HCT116 (cell line): ENCODE measurements at regions of chr2 and their contacts with region 1.

Region 1: GRCh38 chr2:67476809-67477790 is 80.0 kb downstream of the ETAA1 start:
- DNase-seq: peak; percentile 12
- ATAC-seq: peak; percentile 73
- H3K4me3 ChIP-seq: no peak overlapping the region
- H3K27ac ChIP-seq: no peak overlapping the region
- H3K4me1 ChIP-seq: no peaks in the 10 kb centered on the region
- H3K27me3 ChIP-seq: no peaks in the 10 kb centered on the region; the same call in 1 of the 2 replicates
- CTCF ChIP-seq: peak; percentile 29 to 54 (median 38); a peak in 4 of 6 replicates
- POLR2A ChIP-seq: no peak
- RAD21 ChIP-seq: peak; percentile 66

Region 2: GRCh38 chr2:65647249-65647842 is 1829.8 kb before region 1 on chr2:
- CTCF ChIA-PET with region 1: no interaction called
- POLR2A ChIA-PET with region 1: no interaction called
- RAD21 ChIA-PET with region 1: no interaction called
- intact Hi-C with region 1: loop called (anchors 10 kb)
- DNase-seq: no peak
- ATAC-seq: no peak
- H3K4me3 ChIP-seq: no peak overlapping the region
- H3K27ac ChIP-seq: no peak overlapping the region
- H3K4me1 ChIP-seq: no peaks in the 10 kb centered on the region
- H3K27me3 ChIP-seq: no peaks in the 10 kb centered on the region
- CTCF ChIP-seq: no peak
- POLR2A ChIP-seq: no peak
- RAD21 ChIP-seq: no peak

Region 3: GRCh38 chr2:67290451-67291290 is 186.4 kb before region 1 on chr2:
- CTCF ChIA-PET with region 1: no interaction called
- POLR2A ChIA-PET with region 1: no interaction called
- RAD21 ChIA-PET with region 1: no interaction called
- intact Hi-C with region 1: no loop called
- DNase-seq: peak; percentile 3
- ATAC-seq: no peak
- H3K4me3 ChIP-seq: no peak overlapping the region
- H3K27ac ChIP-seq: no peak overlapping the region
- H3K4me1 ChIP-seq: peaks cover 0 to 8% of the 10 kb centered on the region in 2 experiments; a peak in 1 of 4 replicates
- H3K27me3 ChIP-seq: no peaks in the 10 kb centered on the region
- CTCF ChIP-seq: no peak
- POLR2A ChIP-seq: no peak
- RAD21 ChIP-seq: no peak

Region 4: DNA sequence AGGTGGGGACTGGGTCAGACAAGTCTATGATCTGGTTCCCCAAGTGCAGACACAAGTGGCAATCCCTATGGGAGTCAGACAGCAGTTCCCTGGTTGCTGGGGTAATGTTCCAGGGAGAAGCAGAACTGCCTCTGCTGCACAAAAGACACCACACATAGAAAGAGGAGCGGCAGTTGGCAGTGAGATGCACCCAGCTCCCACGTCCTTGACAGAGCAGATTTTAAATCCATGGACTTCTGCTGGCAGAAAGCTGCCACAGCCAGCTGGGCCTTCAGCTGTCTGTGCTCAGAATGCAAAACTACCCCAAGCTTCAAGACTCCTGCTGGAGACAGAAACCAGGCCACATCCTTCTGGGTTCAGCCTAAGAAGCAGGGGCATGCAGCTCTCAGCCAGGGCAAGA is 67.2 kb after region 1 on chr2:
- CTCF ChIA-PET with region 1: no interaction called
- POLR2A ChIA-PET with region 1: no interaction called
- RAD21 ChIA-PET with region 1: no interaction called
- intact Hi-C with region 1: no loop called
- DNase-seq: no peak
- ATAC-seq: no peak
- H3K4me3 ChIP-seq: no peak overlapping the region
- H3K27ac ChIP-seq: no peak overlapping the region
- H3K4me1 ChIP-seq: no peaks in the 10 kb centered on the region
- H3K27me3 ChIP-seq: no peaks in the 10 kb centered on the region
- CTCF ChIP-seq: no peak
- POLR2A ChIP-seq: no peak
- RAD21 ChIP-seq: no peak